Sigmoid colon (tissue), 7 donors: ENCODE measurements at regions of chr6 and their contacts with region 1.

Region 1: GRCh38 chr6:43053545-43054205 is at the start of gene CUL7:
- DNase-seq: peak; percentile 95
- H3K4me3 ChIP-seq: peak within 1 kb of the TSS; percentile 48 to 78 (median 71)
- H3K27ac ChIP-seq: peak within 1 kb of the TSS; percentile 92 to 95 (median 94)
- H3K4me1 ChIP-seq: peaks cover 0 to 26% (median 21%) of the 10 kb centered on the region in 4 donors
- H3K27me3 ChIP-seq: no peaks in the 10 kb centered on the region
- CTCF ChIP-seq: no peak
- EP300 ChIP-seq: no peak
- POLR2A ChIP-seq: peak in 1 of 2 donors; percentile 67
- total RNA-seq, gene CUL7: 10.3 to 14.4 (median 11.0) TPM

Region 2: DNA sequence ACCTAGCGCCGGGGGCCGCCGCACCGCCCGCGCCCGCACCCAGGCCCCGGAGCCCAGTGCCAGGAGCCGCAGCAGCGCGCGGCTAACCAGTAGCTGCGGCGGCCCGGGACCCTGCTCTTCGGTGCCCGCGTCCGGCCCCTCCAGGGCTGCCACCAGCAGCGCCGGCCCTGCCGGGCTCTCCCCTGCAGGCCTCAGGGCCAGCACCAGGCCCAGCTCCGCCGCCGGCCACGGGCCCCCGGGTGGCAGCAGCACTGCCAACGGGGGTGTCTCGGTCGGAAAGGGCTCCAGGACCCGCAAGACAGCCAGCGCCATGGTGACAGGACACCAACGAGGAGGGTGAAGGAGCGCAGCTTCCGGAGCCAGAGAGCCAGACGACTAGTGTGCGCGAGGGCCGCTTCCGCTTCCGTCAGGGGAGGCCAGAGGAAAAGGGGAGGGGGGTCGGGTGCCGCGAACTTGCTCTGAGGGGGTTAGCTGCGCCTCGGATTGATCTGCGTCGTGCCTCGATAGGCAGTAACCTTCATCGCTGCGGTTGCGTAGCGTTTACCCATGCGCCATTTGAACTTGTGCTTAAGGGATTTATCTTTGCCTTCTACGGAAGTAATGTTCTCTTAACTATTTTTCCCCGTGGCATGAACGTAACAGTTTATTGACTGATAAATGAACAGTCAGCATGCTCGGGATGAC is 74.7 kb before region 1 on chr6 and contains the start of gene PEX6:
- intact Hi-C with region 1: loop called (anchors 2 kb)
- DNase-seq: peak; percentile 93
- H3K4me3 ChIP-seq: peak within 1 kb of the TSS; percentile 82 to 99 (median 90)
- H3K27ac ChIP-seq: peak within 1 kb of the TSS; percentile 91 to 93 (median 93)
- H3K4me1 ChIP-seq: peaks cover 0 to 41% (median 35%) of the 10 kb centered on the region in 4 donors
- H3K27me3 ChIP-seq: no peaks in the 10 kb centered on the region
- CTCF ChIP-seq: no peak
- EP300 ChIP-seq: no peak
- POLR2A ChIP-seq: peak; percentile 43 to 66
- total RNA-seq, gene PEX6: 10.2 to 19.1 (median 18.2) TPM

Region 3: GRCh38 chr6:43021270-43022047 is 32.2 kb before region 1 on chr6 and contains the start of gene RRP36:
- intact Hi-C with region 1: loop called (anchors 2 kb)
- DNase-seq: peak; percentile 86
- H3K4me3 ChIP-seq: peak within 1 kb of the TSS; percentile 55 to 97 (median 78)
- H3K27ac ChIP-seq: peak within 1 kb of the TSS; percentile 81 to 96 (median 89)
- H3K4me1 ChIP-seq: peaks cover 0 to 48% (median 35%) of the 10 kb centered on the region in 4 donors
- H3K27me3 ChIP-seq: no peaks in the 10 kb centered on the region
- CTCF ChIP-seq: no peak
- EP300 ChIP-seq: no peak
- POLR2A ChIP-seq: peak in 1 of 2 donors; percentile 5
- total RNA-seq, gene RRP36: 40.5 to 46.6 (median 43.3) TPM

Region 4: GRCh38 chr6:43143235-43144124 is 89.8 kb after region 1 on chr6:
- intact Hi-C with region 1: loop called (anchors 5 kb)
- DNase-seq: peak; percentile 97
- H3K4me3 ChIP-seq: no peak overlapping the region
- H3K27ac ChIP-seq: peak overlapping the region; percentile 8 to 63 (median 58)
- H3K4me1 ChIP-seq: peaks cover 0 to 13% (median 11%) of the 10 kb centered on the region in 4 donors
- H3K27me3 ChIP-seq: no peaks in the 10 kb centered on the region
- CTCF ChIP-seq: peak; percentile 90 to 93 (median 92)
- EP300 ChIP-seq: no peak
- POLR2A ChIP-seq: no peak